Vagina (tissue), 2 donors: ENCODE measurements at regions of chr17 and their contacts with region 1.

Region 1: DNA sequence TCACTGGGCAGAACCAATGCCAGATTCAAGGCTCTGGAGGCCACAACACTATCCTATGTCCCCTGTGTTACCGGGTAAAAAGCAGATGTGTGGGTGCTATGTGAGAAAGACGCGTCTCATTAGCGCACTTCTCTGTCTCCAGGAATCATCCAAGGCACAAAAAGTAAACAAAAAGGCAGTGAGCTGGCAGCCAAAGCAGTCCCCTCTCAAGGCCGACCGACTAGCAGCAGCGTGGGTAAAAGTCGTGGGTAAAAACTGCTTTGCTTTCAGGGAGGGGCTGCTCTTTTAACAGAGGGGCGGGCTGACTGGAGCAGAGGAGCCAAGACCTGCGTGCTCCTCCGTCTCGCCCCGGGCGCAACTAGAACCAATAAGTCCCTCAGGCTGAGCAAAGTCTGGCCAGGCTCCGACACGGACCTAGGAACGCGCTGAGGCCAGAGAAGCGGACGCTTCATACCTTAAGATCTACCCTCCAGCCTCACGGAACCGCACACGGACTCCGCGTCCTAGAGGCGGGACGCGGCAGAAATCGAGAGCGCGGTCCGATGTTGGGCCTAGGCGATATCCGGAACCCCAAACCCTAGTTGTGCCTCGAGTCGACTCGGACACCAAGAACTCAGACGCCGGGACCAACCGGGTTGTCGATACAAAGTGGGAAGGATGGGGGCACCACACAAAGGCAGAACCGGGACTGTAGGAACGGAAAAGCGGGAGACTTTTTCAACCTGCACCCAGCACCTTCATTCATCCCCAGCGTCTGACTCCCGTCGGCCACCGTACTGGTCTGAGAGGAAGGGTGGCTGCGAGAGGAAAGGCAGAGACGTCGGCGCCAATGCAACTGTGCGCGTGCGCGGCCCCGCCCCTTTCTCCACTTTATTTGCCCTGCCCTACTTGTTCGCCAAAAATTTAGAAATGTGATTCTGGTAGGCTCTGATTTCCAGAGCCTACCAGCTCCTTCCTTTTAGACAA is at the start of gene INTS2:
- DNase-seq: peak in 1 of 2 donors; percentile 96
- H3K4me3 ChIP-seq: peak within 1 kb of the TSS; percentile 69 to 83
- H3K27ac ChIP-seq: peak within 1 kb of the TSS; percentile 80
- H3K4me1 ChIP-seq: peaks cover 17% of the 10 kb centered on the region
- H3K27me3 ChIP-seq: no peaks in the 10 kb centered on the region
- CTCF ChIP-seq: peak in 1 of 3 experiments; percentile 25
- POLR2A ChIP-seq: peak in 1 of 2 donors; percentile 66
- total RNA-seq, gene INTS2: 12.8 TPM

Region 2: DNA sequence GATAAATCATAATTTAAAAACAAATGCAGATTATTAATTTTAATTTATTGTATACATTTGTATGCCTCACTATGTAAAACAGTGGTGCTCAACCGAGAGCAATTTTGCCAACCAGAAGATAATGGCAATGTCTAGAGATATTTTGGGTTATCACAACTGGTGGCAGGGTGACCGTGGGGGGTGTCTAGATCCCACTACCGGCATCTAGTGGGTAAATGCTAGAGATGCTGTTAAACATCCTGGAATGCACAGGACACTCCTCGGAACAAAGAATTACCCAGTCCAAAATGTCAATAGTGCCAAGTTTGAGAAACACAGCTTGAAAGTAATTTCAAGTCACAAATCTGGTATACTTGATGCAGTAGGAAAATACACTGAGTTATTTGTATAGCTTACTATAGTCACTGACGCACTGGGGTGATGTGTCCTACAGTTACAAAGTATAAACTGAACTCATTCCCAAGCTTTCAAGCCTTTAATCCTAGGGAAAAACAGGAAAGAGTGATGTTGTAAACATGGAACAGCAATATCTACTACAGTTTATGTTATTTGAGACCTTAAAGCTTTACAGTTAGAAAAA is 197.7 kb before region 1 on chr17:
- intact Hi-C with region 1: no loop called
- DNase-seq: no peak
- H3K4me3 ChIP-seq: no peak overlapping the region
- H3K27ac ChIP-seq: no peak overlapping the region
- H3K4me1 ChIP-seq: no peaks in the 10 kb centered on the region
- H3K27me3 ChIP-seq: no peaks in the 10 kb centered on the region
- CTCF ChIP-seq: no peak
- POLR2A ChIP-seq: no peak

Region 3: DNA sequence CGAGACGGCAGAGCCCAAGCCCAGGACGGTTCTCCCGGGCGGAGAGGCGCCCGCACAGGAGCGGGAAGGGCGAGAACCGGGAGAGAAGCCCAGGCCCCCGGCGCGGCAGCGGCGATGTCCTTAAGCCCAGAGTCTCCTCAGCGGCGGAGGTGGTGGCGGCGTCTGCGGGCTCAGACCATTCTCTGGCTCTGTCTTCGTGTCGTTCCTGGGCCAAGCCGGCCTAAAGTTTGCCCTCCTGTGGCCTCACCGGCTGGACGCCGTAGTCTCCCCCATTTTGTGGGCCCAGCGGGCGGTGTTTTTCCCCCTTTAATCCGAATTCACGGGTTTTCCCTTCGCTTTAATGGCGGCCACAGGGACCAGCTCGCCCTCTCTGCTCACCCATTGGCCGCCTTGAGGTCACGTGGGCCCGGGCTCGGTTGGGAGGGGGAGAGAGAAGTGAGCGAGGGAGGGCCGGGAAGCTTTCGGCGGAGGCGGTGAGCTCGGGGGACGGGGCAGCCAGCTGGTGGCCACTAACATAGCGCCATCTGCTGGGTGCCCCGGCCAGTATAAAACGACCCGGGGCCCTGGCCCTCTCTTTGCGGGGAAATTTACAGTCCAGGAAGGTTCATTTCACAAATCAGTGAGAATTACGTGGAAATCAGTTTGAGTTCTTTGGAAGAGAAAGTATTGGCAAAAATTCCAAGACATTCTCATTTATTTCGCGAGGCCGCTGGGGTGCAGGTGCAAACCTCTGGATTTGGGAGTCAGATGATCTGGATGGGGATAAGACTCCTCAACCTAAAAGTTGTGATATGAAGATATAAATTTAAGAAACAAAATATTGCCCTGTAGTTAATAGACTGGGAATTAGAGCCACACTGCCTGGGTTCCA is 138.3 kb after region 1 on chr17:
- intact Hi-C with region 1: loop called (anchors 5 kb)
- DNase-seq: peak; percentile 97 to 98
- H3K4me3 ChIP-seq: peak overlapping the region; percentile 62 to 98
- H3K27ac ChIP-seq: peak overlapping the region; percentile 99
- H3K4me1 ChIP-seq: peaks cover 42% of the 10 kb centered on the region
- H3K27me3 ChIP-seq: no peaks in the 10 kb centered on the region
- CTCF ChIP-seq: peak; percentile 75 to 97 (median 88)
- POLR2A ChIP-seq: peak in 1 of 2 donors; percentile 79